ENCODE measurements at regions of chr18 and their contacts with region 1.

Region 1: DNA sequence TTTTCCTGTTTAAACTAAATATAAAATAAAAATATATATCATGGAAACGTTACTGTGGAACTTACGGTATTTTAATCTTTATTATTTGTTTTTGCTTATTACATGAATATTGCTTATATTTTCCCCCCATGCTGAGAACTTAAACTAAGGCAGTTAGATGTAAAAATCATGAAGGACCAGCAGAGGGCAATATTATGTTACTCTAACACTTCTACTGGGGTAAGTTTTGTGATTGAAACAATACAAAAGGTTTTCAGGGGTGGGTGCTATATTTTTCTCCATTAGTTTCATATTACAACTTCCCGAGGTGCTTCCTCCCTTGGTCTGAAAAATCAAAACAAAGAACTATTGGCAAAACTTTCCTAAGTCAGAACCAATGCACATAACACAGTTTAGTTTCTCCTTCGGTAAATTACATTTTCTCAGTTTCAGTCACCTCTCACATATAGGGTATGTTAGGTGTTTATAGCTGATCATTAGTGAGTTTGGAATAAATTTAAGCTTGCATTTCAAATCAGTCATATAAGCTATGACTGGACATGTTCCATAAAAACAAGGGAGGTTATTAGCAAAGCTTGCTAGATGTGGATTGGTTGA is 54.8 kb downstream of the ZNF407 start:
- DNase-seq: no peak
- ATAC-seq: peak in 2 of 4 donors; percentile 58 to 70
- H3K4me3 ChIP-seq: no peak overlapping the region
- H3K27ac ChIP-seq: no peak overlapping the region
- H3K4me1 ChIP-seq: no peaks in the 10 kb centered on the region
- H3K27me3 ChIP-seq: no peaks in the 10 kb centered on the region
- CTCF ChIP-seq: peak; percentile 60

Region 2: GRCh38 chr18:74896390-74896991 is 244.0 kb after region 1 on chr18:
- intact Hi-C with region 1: loop called in 1 of 2 experiments (anchors 10 kb)
- DNase-seq: no peak
- ATAC-seq: peak; percentile 92 to 96 (median 94)
- H3K4me3 ChIP-seq: no peak overlapping the region
- H3K27ac ChIP-seq: no peak overlapping the region
- H3K4me1 ChIP-seq: no peaks in the 10 kb centered on the region
- H3K27me3 ChIP-seq: no peaks in the 10 kb centered on the region
- CTCF ChIP-seq: peak; percentile 70

Region 3: GRCh38 chr18:75161256-75162028 is 509.0 kb after region 1 on chr18:
- intact Hi-C with region 1: loop called in 1 of 2 experiments (anchors 5 kb)
- DNase-seq: peak; percentile 35 to 63
- ATAC-seq: peak; percentile 76 to 84 (median 80)
- H3K4me3 ChIP-seq: peak overlapping the region; percentile 61
- H3K27ac ChIP-seq: peak overlapping the region; percentile 28
- H3K4me1 ChIP-seq: peaks cover 13% of the 10 kb centered on the region
- H3K27me3 ChIP-seq: peaks cover 0 to 1% (median 0%) of the 10 kb centered on the region in 3 donors
- CTCF ChIP-seq: peak; percentile 19

Region 4: GRCh38 chr18:75478996-75479880 is 826.7 kb after region 1 on chr18:
- intact Hi-C with region 1: loop called (anchors 2 to 5 kb)
- DNase-seq: no peak
- ATAC-seq: peak; percentile 56 to 87 (median 65)
- H3K4me3 ChIP-seq: no peak overlapping the region
- H3K27ac ChIP-seq: no peak overlapping the region
- H3K4me1 ChIP-seq: no peaks in the 10 kb centered on the region
- H3K27me3 ChIP-seq: peaks cover 0 to 4% (median 0%) of the 10 kb centered on the region in 3 donors
- CTCF ChIP-seq: peak; percentile 63

Region 5: DNA sequence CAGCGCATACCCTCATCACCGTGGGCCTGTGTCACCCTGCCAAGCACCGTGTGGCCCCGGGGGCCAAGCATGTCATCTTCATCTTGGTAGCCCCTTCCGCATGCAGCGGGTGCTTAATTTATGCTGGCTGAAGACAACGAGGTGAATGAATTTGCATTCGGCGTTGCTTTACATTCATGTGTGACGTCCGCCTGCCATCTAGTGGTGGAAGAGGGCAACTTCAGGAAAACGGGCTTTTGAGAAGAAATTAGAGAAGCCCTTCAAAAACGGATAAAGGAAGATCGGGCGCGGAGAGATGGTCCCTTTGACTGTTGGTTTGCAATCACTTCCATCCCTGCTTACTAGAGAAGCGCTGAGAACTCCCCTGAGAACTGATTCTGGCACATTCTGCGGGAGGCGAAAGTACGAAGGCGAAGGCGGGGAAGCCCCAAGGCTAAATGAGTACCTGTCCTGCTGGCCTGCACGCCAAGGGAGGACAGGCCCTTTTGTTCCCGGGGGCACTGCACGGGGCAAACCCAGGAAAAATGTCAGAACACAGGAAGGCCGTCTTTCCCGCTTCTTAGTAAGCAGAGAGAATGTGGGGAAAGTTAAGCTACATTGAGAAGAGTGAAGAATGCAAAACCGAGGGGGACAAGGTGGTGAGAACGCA is 1696.7 kb after region 1 on chr18:
- intact Hi-C with region 1: loop called in 1 of 2 experiments (anchors 10 kb)
- DNase-seq: peak; percentile 50 to 70
- ATAC-seq: peak in 3 of 4 donors; percentile 41 to 78 (median 56)
- H3K4me3 ChIP-seq: peak overlapping the region; percentile 29
- H3K27ac ChIP-seq: no peak overlapping the region
- H3K4me1 ChIP-seq: no peaks in the 10 kb centered on the region
- H3K27me3 ChIP-seq: no peaks in the 10 kb centered on the region
- CTCF ChIP-seq: peak; percentile 86